Heart right ventricle (tissue), 16 donors: ENCODE measurements at regions of chr1 and their contacts with region 1.

Region 1: GRCh38 chr1:1019122-1019999 is 559 bp upstream of the AGRN start:
- DNase-seq: peak; percentile 78 to 88
- ATAC-seq: peak; percentile 69 to 94 (median 86)
- H3K4me3 ChIP-seq: peak overlapping the region in 9 of 10 donors; percentile 67 to 95 (median 78)
- H3K27ac ChIP-seq: peak overlapping the region; percentile 70 to 98 (median 96)
- H3K4me1 ChIP-seq: peaks cover 18 to 56% (median 29%) of the 10 kb centered on the region in 9 donors
- H3K27me3 ChIP-seq: peaks cover 0 to 39% (median 0%) of the 10 kb centered on the region in 7 donors
- CTCF ChIP-seq: peak; percentile 46 to 72 (median 57)

Region 2: DNA sequence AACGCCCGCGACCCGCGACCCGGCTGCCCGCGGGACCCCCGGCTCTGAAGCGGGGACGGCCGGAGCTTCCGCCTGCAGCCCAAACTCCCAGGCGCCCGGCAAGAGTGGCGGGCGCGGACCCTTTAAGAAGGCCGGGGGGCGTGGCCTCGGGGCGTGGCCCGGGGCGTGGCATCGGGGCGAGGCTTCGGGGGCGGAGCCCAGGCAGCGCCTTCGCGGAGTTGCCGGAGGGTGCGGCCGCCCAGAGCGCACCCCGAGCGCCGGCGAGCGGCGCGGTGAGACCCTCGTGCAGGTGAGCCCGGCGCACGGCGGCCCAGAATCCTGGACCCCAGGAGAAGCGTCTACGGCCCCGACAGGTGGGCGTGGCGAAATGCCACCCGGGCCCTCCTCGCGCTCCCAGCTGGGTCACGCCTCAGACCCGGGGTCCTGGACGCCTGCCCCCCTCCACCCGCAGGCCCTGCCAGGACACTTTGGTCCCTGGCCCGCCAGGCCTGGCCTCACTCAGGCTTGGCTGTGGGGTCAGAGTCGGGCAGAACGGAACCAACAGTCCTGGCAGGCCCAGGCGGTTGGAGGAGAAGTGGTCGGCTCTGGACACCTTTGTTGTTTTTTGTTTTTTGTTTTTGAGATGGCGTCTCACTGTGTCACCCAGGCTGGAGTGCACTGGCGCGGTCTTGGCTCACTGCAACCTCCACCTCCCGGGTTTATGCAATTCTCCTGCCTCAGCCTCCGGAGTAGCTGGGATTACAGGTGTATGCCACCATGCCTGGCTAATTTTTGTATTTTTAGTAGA is 40.3 kb after region 1 on chr1:
- intact Hi-C with region 1: loop called in 2 of 10 experiments (anchors 5 to 10 kb)
- DNase-seq: peak; percentile 83 to 91
- ATAC-seq: peak; percentile 82 to 93 (median 87)
- H3K4me3 ChIP-seq: peak overlapping the region; percentile 24 to 64 (median 58)
- H3K27ac ChIP-seq: no peak overlapping the region
- H3K4me1 ChIP-seq: peaks cover 4 to 38% (median 28%) of the 10 kb centered on the region in 9 donors
- H3K27me3 ChIP-seq: peaks cover 22 to 80% (median 69%) of the 10 kb centered on the region in 7 donors
- CTCF ChIP-seq: peak in 2 of 9 donors; percentile 2 to 3

Region 3: DNA sequence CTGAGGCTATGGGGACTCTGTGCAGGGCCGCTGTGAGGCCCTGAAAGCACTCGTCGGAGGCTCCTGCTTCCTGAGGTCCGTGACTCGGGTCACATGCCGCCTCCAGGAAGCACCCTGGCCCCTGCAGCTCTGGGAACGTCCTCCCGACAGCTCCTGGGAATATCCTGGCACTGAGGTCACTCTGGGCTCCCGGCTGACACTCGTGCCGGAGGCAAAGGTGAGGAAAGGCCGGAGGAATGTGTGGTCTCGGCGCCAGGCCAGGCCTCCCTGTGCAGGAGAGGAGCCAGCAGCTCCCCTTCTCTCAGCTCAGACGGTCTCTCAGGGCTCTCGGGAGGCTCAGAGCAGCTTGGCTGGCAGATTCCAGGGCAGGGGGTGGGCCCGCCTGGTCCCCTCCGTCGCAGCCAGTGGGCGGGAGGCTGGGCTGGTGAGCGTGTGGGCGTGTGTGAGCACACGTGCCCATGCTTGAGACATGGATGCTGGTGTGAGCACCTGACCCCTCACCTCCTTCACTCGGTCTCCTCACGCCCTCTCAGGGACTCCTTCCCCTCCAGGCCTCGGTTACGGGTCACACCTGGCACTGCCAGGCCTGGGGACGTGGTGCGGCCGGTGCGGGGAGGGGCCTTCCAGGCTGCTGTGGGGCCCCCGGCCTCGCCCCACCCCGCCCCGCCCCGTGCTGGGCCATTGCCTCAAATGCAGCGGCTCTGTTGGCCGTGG is 60.2 kb after region 1 on chr1:
- intact Hi-C with region 1: no loop called
- DNase-seq: peak in 1 of 2 donors; percentile 33
- ATAC-seq: peak; percentile 55 to 74 (median 64)
- H3K4me3 ChIP-seq: peak overlapping the region; percentile 8 to 47 (median 32)
- H3K27ac ChIP-seq: peak overlapping the region in 7 of 10 donors; percentile 11 to 74 (median 53)
- H3K4me1 ChIP-seq: peaks cover 6 to 13% (median 12%) of the 10 kb centered on the region in 9 donors
- H3K27me3 ChIP-seq: peaks cover 3 to 21% (median 9%) of the 10 kb centered on the region in 7 donors
- CTCF ChIP-seq: no peak

Region 4: DNA sequence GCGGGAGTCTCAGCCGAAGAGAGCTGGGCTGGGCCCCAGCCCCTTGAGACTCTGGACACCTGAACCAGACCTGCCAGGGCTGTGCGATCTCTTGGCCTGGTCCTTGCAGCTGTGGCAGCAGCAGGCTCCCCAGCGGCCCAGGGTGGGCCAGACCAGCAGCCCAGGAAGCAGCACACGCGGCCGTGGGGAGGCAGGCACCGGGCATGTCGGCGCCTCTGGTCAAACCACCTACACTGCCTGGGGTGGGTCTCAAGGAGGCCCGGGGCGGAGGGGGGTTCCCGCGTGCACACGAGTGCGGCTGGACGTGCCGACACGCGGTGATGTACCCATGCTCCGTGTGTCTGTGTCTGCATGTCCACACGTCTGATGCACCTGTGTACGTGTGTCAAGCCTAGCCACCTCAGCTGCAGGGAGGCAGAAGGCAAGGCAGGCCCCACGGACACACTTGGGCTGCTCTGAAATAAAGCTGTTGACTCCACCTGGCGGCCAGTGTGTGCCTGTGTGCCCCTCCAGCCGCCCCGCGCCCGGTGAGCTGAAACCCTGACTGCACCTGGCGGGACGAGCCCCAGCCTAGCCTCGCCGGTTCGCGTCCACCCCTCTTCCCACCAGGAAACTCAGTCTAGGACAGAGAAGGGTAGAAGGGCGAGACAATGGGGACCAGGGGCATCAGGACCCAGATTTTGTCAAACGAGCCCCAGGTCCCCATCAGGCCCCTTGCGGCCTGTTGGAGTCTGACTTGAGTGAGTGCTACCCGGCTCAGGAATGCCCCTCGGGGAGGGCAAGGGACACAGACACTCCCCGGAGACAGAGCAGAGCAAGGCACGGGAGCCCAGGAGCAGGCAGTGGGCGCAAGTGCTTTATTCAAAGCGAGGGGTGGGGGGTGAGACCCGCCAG is 272.4 kb after region 1 on chr1:
- intact Hi-C with region 1: loop called in 1 of 10 experiments (anchors 10 kb)
- DNase-seq: peak; percentile 56 to 64
- ATAC-seq: peak; percentile 54 to 83 (median 68)
- H3K4me3 ChIP-seq: no peak overlapping the region
- H3K27ac ChIP-seq: no peak overlapping the region
- H3K4me1 ChIP-seq: peaks cover 0 to 13% (median 7%) of the 10 kb centered on the region in 9 donors
- H3K27me3 ChIP-seq: peaks cover 0 to 12% (median 8%) of the 10 kb centered on the region in 7 donors
- CTCF ChIP-seq: peak; percentile 33 to 73 (median 65)